Activated naive CD4-positive, alpha-beta T cell treated with anti-CD3 and anti-CD28 coated beads for 36 hours (primary cell): ENCODE measurements at regions of chr12 and their contacts with region 1.

Region 1: GRCh38 chr12:56315622-56316473 is at the start of gene CNPY2:
- DNase-seq: peak; percentile 92
- H3K4me3 Mint-ChIP-seq: peak within 1 kb of the TSS; percentile 97
- H3K27ac Mint-ChIP-seq: peak within 1 kb of the TSS; percentile 97
- H3K4me1 Mint-ChIP-seq: peaks cover 16% of the 10 kb centered on the region
- H3K27me3 Mint-ChIP-seq: no peaks in the 10 kb centered on the region
- total RNA-seq, gene CNPY2: 47.5 to 57.3 TPM

Region 2: DNA sequence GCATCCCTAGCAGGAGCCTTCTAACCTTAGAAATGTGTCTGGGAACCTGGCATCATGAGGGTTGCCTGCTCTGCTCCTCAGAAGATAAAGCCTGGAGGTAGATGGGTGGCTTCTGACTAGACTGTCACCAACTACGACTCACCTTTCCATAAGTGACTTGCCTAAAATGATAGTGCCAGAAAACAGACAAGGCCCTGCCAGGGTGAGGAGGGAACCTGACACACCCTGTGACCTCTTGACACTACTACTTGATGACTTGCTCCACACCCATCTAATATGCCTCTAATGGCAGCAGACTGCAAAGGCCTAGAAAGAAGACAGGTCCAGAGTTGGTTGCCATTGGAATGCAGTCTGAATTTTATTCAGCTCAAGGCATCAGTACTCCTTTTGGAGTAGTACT is 103.5 kb before region 1 on chr12:
- CTCF ChIA-PET with region 1: no interaction called
- intact Hi-C with region 1: no loop called
- DNase-seq: peak; percentile 54
- H3K4me3 Mint-ChIP-seq: no peak overlapping the region
- H3K27ac Mint-ChIP-seq: no peak overlapping the region
- H3K4me1 Mint-ChIP-seq: peaks cover 11% of the 10 kb centered on the region
- H3K27me3 Mint-ChIP-seq: no peaks in the 10 kb centered on the region

Region 3: GRCh38 chr12:56461235-56462159 is 145.6 kb after region 1 on chr12:
- CTCF ChIA-PET with region 1: interaction called, 20 read pairs
- intact Hi-C with region 1: loop called (anchors 1 kb)
- DNase-seq: no peak
- H3K4me3 Mint-ChIP-seq: no peak overlapping the region
- H3K27ac Mint-ChIP-seq: no peak overlapping the region
- H3K4me1 Mint-ChIP-seq: peaks cover 3% of the 10 kb centered on the region
- H3K27me3 Mint-ChIP-seq: no peaks in the 10 kb centered on the region